ENCODE measurements at regions of chr1 and their contacts with region 1.

Region 1: DNA sequence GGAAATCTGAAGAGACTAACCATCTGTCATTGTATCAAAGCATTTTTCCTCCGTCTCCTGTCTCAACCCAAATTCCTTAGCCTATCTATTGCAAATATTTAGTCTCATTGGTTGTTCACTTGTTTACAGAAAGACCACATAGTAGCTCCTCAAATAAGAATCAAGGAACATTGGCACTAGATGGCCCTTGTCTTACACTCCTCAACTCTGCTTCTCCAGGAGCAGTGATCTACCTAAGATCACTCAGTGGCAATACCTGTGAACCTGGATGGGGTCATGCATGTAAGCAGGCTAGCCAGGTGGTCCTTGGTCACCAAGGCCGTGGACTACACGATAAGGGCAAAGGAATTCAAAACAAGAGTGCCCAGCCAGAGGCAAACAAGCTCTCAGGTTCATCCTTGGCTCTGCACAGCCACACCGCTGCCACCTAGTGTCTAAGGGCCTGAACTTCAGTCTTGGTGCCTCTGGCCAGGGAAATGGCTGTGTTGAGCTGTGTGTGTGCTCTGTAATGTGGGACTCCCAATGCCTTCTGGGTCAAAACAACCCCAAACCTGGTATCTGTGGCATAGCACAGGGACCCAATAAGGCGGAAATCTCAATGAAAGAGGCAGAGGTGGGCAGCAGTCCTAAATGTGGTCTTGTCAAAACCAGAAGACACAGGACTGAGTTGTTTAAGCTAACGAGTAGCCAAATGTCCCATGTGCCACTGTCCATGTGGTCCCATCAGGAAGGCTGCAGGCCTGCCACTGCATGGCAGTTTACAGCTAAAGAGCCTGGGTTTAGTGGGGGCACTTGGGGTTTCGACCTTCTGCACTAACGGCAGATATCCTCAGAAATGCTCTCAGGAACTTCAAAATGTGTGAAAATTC is 54.5 kb downstream of the GPR161 start:
- DNase-seq: peak; percentile 64
- H3K4me3 ChIP-seq: no peak overlapping the region
- H3K27ac ChIP-seq: no peak overlapping the region
- H3K4me1 ChIP-seq: peaks cover 28% of the 10 kb centered on the region
- H3K27me3 ChIP-seq: no peaks in the 10 kb centered on the region
- CTCF ChIP-seq: peak; percentile 95 to 97

Region 2: GRCh38 chr1:167599957-167600581 is 482.2 kb before region 1 on chr1:
- CTCF ChIA-PET with region 1: no interaction called
- dilution Hi-C with region 1: no loop called
- in situ Hi-C with region 1: no loop called
- intact Hi-C with region 1: loop called (anchors 10 kb)
- DNase-seq: peak; percentile 63
- H3K4me3 ChIP-seq: no peak overlapping the region
- H3K27ac ChIP-seq: no peak overlapping the region
- H3K4me1 ChIP-seq: peaks cover 18% of the 10 kb centered on the region
- H3K27me3 ChIP-seq: no peaks in the 10 kb centered on the region
- CTCF ChIP-seq: peak; percentile 59 to 64

Region 3: GRCh38 chr1:167721617-167722151 is 360.6 kb before region 1 on chr1 and contains the start of gene MPZL1:
- CTCF ChIA-PET with region 1: interaction called, 8 read pairs
- dilution Hi-C with region 1: no loop called
- in situ Hi-C with region 1: no loop called
- intact Hi-C with region 1: loop called (anchors 1 kb)
- DNase-seq: peak; percentile 91
- H3K4me3 ChIP-seq: peak within 1 kb of the TSS; percentile 88 to 98 (median 94)
- H3K27ac ChIP-seq: peak within 1 kb of the TSS; percentile 66
- H3K4me1 ChIP-seq: peaks cover 42% of the 10 kb centered on the region
- H3K27me3 ChIP-seq: no peaks in the 10 kb centered on the region
- CTCF ChIP-seq: no peak
- total RNA-seq, gene MPZL1: 148 to 227 TPM

Region 4: GRCh38 chr1:168145184-168146159 is 63.2 kb after region 1 on chr1:
- CTCF ChIA-PET with region 1: interaction called, 5 read pairs
- dilution Hi-C with region 1: no loop called
- in situ Hi-C with region 1: no loop called
- intact Hi-C with region 1: loop called (anchors 5 kb)
- DNase-seq: peak; percentile 69
- H3K4me3 ChIP-seq: no peak overlapping the region
- H3K27ac ChIP-seq: no peak overlapping the region
- H3K4me1 ChIP-seq: no peaks in the 10 kb centered on the region
- H3K27me3 ChIP-seq: no peaks in the 10 kb centered on the region
- CTCF ChIP-seq: peak; percentile 98 to 99

Region 5: GRCh38 chr1:168170564-168171508 is 88.6 kb after region 1 on chr1:
- CTCF ChIA-PET with region 1: no interaction called
- dilution Hi-C with region 1: no loop called
- in situ Hi-C with region 1: no loop called
- intact Hi-C with region 1: no loop called
- DNase-seq: no peak
- H3K4me3 ChIP-seq: no peak overlapping the region
- H3K27ac ChIP-seq: no peak overlapping the region
- H3K4me1 ChIP-seq: no peaks in the 10 kb centered on the region
- H3K27me3 ChIP-seq: no peaks in the 10 kb centered on the region
- CTCF ChIP-seq: no peak

Region 6: GRCh38 chr1:168439456-168440375 is 357.5 kb after region 1 on chr1:
- CTCF ChIA-PET with region 1: interaction called, 11 read pairs
- dilution Hi-C with region 1: no loop called
- in situ Hi-C with region 1: no loop called
- intact Hi-C with region 1: no loop called
- DNase-seq: peak; percentile 74
- H3K4me3 ChIP-seq: no peak overlapping the region
- H3K27ac ChIP-seq: no peak overlapping the region
- H3K4me1 ChIP-seq: peaks cover 9% of the 10 kb centered on the region
- H3K27me3 ChIP-seq: no peaks in the 10 kb centered on the region
- CTCF ChIP-seq: peak; percentile 84 to 85

Region 7: GRCh38 chr1:170049176-170049800 is 1967.0 kb after region 1 on chr1:
- CTCF ChIA-PET with region 1: no interaction called
- dilution Hi-C with region 1: no loop called
- in situ Hi-C with region 1: no loop called
- intact Hi-C with region 1: no loop called
- DNase-seq: no peak
- H3K4me3 ChIP-seq: no peak overlapping the region
- H3K27ac ChIP-seq: no peak overlapping the region
- H3K4me1 ChIP-seq: no peaks in the 10 kb centered on the region
- H3K27me3 ChIP-seq: no peaks in the 10 kb centered on the region
- CTCF ChIP-seq: no peak